CD14-positive monocyte (primary cell): ENCODE measurements at regions of chr19 and their contacts with region 1.

Region 1: GRCh38 chr19:17394891-17395415 is 957 bp upstream of the CCDC194 start:
- DNase-seq: peak; percentile 44 to 63 (median 48)
- H3K4me3 ChIP-seq: peak overlapping the region in 1 of 3 experiments; percentile 20
- H3K4me3 Mint-ChIP-seq: no peak overlapping the region
- H3K27ac ChIP-seq: no peak overlapping the region
- H3K27ac Mint-ChIP-seq: peak overlapping the region in 2 of 7 donors; percentile 71 to 78
- H3K4me1 ChIP-seq: peaks cover 31 to 38% of the 10 kb centered on the region in 2 donors
- H3K4me1 Mint-ChIP-seq: peaks cover 30% of the 10 kb centered on the region
- H3K27me3 ChIP-seq: peaks cover 3 to 8% of the 10 kb centered on the region in 2 donors
- H3K27me3 Mint-ChIP-seq: peaks cover 10 to 12% (median 10%) of the 10 kb centered on the region in 3 donors
- CTCF ChIP-seq: peak; percentile 83

Region 2: DNA sequence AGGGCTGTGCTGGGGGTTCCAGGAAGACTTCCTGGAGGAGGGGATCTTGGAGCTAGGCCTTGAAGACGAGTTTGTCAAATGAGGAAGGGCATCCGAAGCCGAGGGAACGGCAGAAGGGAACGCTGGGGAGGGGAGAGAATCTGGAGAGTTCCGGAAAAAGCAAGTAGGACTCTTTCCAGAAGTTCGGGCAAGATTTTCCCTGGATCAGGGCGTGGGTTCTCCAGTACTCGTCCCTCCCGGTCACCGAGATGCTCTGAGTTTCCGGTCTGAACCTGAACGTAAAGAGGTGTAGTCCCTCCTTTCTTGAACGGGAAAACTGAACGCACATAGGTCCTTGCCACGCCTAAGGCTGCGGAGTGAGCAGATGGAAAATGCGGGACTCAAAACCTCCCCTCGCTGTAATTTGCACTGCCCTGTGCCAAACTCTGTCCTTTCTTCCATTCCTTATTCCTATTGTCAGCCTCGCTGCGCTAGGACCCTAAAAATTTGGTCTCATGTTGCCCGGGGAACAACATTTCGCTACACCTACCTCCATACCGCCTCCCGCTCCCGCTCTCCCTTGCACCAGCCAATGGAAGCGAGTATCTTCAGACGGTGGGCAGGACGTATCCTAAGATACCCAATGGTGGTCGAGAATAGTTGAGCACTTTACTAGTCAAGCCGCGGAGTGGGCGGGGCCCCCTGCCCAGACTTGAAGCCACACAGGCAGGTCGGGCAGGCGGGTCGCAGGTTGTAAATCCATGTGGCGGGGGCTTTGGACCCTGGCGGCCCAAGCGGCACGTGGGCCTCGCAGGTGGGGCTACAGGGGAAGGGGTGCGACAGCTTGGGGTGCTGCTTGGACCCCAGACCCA is 57.9 kb before region 1 on chr19 and contains the start of gene GTPBP3:
- intact Hi-C with region 1: no loop called
- DNase-seq: peak; percentile 91 to 96 (median 96)
- H3K4me3 ChIP-seq: peak within 1 kb of the TSS; percentile 69 to 94 (median 90)
- H3K4me3 Mint-ChIP-seq: peak within 1 kb of the TSS; percentile 95 to 99
- H3K27ac ChIP-seq: peak within 1 kb of the TSS; percentile 82 to 90
- H3K27ac Mint-ChIP-seq: peak within 1 kb of the TSS; percentile 89 to 97 (median 92)
- H3K4me1 ChIP-seq: peaks cover 42 to 61% of the 10 kb centered on the region in 2 donors
- H3K4me1 Mint-ChIP-seq: peaks cover 34% of the 10 kb centered on the region
- H3K27me3 ChIP-seq: no peaks in the 10 kb centered on the region
- H3K27me3 Mint-ChIP-seq: peaks cover 0 to 1% (median 0%) of the 10 kb centered on the region in 3 donors
- CTCF ChIP-seq: no peak
- polyA plus RNA-seq, gene GTPBP3: 1.0 to 22.0 (median 1.7) TPM

Region 3: GRCh38 chr19:17469481-17470067 is 74.6 kb after region 1 on chr19:
- intact Hi-C with region 1: loop called in 1 of 2 experiments (anchors 5 kb)
- DNase-seq: peak; percentile 73 to 90 (median 81)
- H3K4me3 ChIP-seq: peak overlapping the region; percentile 63 to 90 (median 81)
- H3K4me3 Mint-ChIP-seq: peak overlapping the region; percentile 98 to 99
- H3K27ac ChIP-seq: peak overlapping the region; percentile 63 to 70
- H3K27ac Mint-ChIP-seq: peak overlapping the region; percentile 87 to 99 (median 96)
- H3K4me1 ChIP-seq: peaks cover 54 to 66% of the 10 kb centered on the region in 2 donors
- H3K4me1 Mint-ChIP-seq: peaks cover 62% of the 10 kb centered on the region
- H3K27me3 ChIP-seq: no peaks in the 10 kb centered on the region
- H3K27me3 Mint-ChIP-seq: peaks cover 2 to 3% (median 2%) of the 10 kb centered on the region in 3 donors
- CTCF ChIP-seq: no peak

Region 4: DNA sequence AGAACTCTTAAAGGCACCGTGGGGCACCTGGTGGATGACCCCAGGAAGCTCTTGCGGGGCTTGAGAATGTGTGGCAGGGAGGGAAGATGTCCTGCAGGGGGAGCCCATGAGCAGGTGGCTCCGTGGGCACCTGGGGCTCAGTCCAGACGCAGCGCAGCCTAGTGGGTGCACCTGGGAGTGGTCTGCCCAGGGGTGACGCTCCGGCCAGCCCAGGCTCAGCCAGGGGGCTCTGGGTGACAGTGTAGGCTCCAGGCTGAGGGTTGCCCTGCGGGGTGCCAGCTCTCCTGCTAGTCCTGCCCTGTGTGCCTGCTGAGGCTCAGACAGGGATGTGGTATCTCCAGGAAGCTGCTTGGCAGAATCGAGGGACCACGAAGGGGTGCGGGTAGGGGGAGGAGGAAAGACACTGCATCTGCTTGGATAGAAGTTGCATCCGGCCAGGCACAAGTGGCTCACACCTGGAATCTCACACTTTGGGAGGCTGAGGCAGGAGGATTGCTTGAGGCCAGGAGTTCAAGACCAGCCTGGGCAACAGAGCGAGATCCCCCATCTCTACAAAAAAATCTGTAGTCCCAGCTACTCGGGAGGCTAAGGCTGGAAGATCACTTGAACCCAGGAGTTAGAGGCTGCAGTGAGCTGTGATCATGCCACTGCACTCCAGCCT is 101.5 kb after region 1 on chr19:
- intact Hi-C with region 1: no loop called
- DNase-seq: peak; percentile 75 to 85 (median 82)
- H3K4me3 ChIP-seq: peak overlapping the region in 1 of 3 experiments; percentile 39
- H3K4me3 Mint-ChIP-seq: no peak overlapping the region
- H3K27ac ChIP-seq: no peak overlapping the region
- H3K27ac Mint-ChIP-seq: peak overlapping the region in 2 of 7 donors; percentile 46 to 63
- H3K4me1 ChIP-seq: peaks cover 29 to 31% of the 10 kb centered on the region in 2 donors
- H3K4me1 Mint-ChIP-seq: peaks cover 42% of the 10 kb centered on the region
- H3K27me3 ChIP-seq: no peaks in the 10 kb centered on the region
- H3K27me3 Mint-ChIP-seq: peaks cover 0 to 4% (median 0%) of the 10 kb centered on the region in 3 donors
- CTCF ChIP-seq: peak; percentile 99

Region 5: DNA sequence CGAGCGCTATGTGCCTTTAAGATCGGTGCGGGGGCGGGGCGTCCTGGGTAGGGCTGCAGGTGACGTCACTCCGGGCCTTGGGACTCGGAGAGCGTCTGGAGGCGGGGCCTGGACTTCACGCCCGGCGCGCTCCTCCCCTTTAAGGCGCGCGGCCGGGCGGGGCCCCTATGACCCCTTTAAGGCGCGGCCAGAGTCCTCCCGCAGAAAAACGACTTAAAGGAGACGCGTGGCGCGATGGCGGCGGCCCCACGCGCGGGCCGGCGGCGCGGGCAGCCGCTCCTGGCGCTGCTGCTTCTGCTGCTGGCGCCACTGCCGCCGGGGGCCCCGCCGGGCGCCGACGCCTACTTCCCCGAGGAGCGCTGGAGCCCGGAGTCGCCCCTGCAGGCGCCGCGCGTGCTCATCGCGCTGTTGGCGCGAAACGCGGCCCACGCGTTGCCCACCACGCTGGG is 160.6 kb after region 1 on chr19 and contains the start of gene COLGALT1:
- intact Hi-C with region 1: no loop called
- DNase-seq: peak; percentile 97 to 98 (median 98)
- H3K4me3 ChIP-seq: peak within 1 kb of the TSS; percentile 74 to 95 (median 93)
- H3K4me3 Mint-ChIP-seq: peak within 1 kb of the TSS; percentile 83 to 91
- H3K27ac ChIP-seq: peak within 1 kb of the TSS; percentile 83
- H3K27ac Mint-ChIP-seq: peak within 1 kb of the TSS; percentile 89 to 99 (median 94)
- H3K4me1 ChIP-seq: peaks cover 56 to 59% of the 10 kb centered on the region in 2 donors
- H3K4me1 Mint-ChIP-seq: peaks cover 43% of the 10 kb centered on the region
- H3K27me3 ChIP-seq: no peaks in the 10 kb centered on the region
- H3K27me3 Mint-ChIP-seq: peaks cover 0 to 5% (median 1%) of the 10 kb centered on the region in 3 donors
- CTCF ChIP-seq: no peak
- polyA plus RNA-seq, gene COLGALT1: 66.8 to 176 (median 68.8) TPM

Region 6: GRCh38 chr19:17641181-17641580 is 246.2 kb after region 1 on chr19:
- intact Hi-C with region 1: no loop called
- DNase-seq: no peak
- H3K4me3 ChIP-seq: no peak overlapping the region
- H3K4me3 Mint-ChIP-seq: no peak overlapping the region
- H3K27ac ChIP-seq: no peak overlapping the region
- H3K27ac Mint-ChIP-seq: no peak overlapping the region
- H3K4me1 ChIP-seq: no peaks in the 10 kb centered on the region
- H3K4me1 Mint-ChIP-seq: no peaks in the 10 kb centered on the region
- H3K27me3 ChIP-seq: no peaks in the 10 kb centered on the region
- H3K27me3 Mint-ChIP-seq: peaks cover 1 to 12% (median 6%) of the 10 kb centered on the region in 3 donors
- CTCF ChIP-seq: no peak